PC-9 (cell line): ENCODE measurements at regions of chrX and their contacts with region 1.

Region 1: DNA sequence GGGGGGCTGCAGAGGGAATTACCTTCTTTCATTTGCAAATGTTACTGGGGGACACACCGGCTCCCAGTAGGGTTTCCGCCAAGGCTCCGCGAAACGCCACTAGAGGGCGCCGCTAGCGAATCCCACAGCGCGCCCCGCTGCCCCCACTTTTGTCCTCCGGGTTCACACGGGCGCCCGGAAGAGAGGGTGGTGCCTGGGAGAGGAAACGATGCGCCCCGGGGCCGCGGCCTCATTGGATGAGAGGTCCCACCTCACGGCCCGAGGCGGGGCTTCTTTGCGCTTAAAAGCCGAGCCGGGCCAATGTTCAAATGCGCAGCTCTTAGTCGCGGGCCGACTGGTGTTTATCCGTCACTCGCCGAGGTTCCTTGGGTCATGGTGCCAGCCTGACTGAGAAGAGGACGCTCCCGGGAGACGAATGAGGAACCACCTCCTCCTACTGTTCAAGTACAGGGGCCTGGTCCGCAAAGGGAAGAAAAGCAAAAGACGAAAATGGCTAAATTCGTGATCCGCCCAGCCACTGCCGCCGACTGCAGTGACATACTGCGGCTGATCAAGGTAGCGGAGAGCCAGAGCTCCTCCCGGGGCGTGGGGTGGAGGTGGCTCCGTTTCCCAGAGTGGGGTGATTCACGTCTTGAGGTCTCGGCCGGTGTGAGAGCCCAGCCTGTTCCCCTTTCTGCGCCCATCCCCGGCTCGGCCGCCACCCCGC is at the start of gene SAT1:
- DNase-seq: peak; percentile 86 to 95
- H3K4me3 ChIP-seq: peak within 1 kb of the TSS; percentile 94
- H3K27ac ChIP-seq: peak within 1 kb of the TSS; percentile 98
- H3K4me1 ChIP-seq: peaks cover 45% of the 10 kb centered on the region
- H3K27me3 ChIP-seq: no peaks in the 10 kb centered on the region
- CTCF ChIP-seq: peak; percentile 85
- total RNA-seq, gene SAT1: 99.1 and 131 TPM in 2 replicates

Region 2: GRCh38 chrX:23694606-23695005 is 88.4 kb before region 1 on chrX:
- CTCF ChIA-PET with region 1: no interaction called
- POLR2A ChIA-PET with region 1: no interaction called
- intact Hi-C with region 1: loop called (anchors 5 kb)
- DNase-seq: peak; percentile 38 to 43
- H3K4me3 ChIP-seq: no peak overlapping the region
- H3K27ac ChIP-seq: no peak overlapping the region
- H3K4me1 ChIP-seq: no peaks in the 10 kb centered on the region
- H3K27me3 ChIP-seq: no peaks in the 10 kb centered on the region
- CTCF ChIP-seq: peak; percentile 49

Region 3: GRCh38 chrX:23720117-23720677 is 62.8 kb before region 1 on chrX:
- CTCF ChIA-PET with region 1: no interaction called
- POLR2A ChIA-PET with region 1: no interaction called
- intact Hi-C with region 1: no loop called
- DNase-seq: no peak
- H3K4me3 ChIP-seq: no peak overlapping the region
- H3K27ac ChIP-seq: no peak overlapping the region
- H3K4me1 ChIP-seq: no peaks in the 10 kb centered on the region
- H3K27me3 ChIP-seq: no peaks in the 10 kb centered on the region
- CTCF ChIP-seq: no peak

Region 4: GRCh38 chrX:23756157-23756559 is 26.9 kb before region 1 on chrX:
- CTCF ChIA-PET with region 1: interaction called, 4 read pairs
- POLR2A ChIA-PET with region 1: no interaction called
- intact Hi-C with region 1: loop called (anchors 2 kb)
- DNase-seq: peak in 1 of 2 experiments; percentile 40
- H3K4me3 ChIP-seq: no peak overlapping the region
- H3K27ac ChIP-seq: no peak overlapping the region
- H3K4me1 ChIP-seq: peaks cover 6% of the 10 kb centered on the region; the same call in 1 of the 2 replicates
- H3K27me3 ChIP-seq: no peaks in the 10 kb centered on the region
- CTCF ChIP-seq: peak; percentile 81

Region 5: DNA sequence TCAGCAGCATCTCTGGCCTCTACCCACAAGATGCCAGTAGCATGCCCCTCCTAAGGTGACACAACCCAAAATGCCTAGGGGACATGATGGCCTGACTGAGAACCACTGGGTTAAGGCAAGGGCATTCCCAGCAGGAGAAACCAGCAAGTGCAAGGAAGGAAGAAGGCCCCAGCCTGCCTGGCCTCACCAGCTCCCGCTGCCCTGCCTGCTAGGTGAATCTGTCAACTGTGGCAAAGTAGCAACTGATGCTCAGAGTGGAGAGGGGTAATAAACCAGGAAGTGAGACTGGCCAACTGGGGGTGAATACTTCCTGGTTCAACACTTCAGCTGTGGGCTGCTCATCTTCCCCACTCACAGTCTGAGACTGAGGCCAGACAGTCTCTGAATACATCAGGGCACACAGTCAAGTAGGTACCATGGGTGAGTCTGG is 34.2 kb after region 1 on chrX:
- CTCF ChIA-PET with region 1: interaction called, 3 read pairs
- POLR2A ChIA-PET with region 1: interaction called, 3 read pairs
- intact Hi-C with region 1: loop called (anchors 1 kb)
- DNase-seq: peak in 1 of 2 experiments; percentile 38
- H3K4me3 ChIP-seq: no peak overlapping the region
- H3K27ac ChIP-seq: no peak overlapping the region
- H3K4me1 ChIP-seq: peaks cover 4% of the 10 kb centered on the region; the same call in 1 of the 2 replicates
- H3K27me3 ChIP-seq: no peaks in the 10 kb centered on the region
- CTCF ChIP-seq: no peak

Region 6: GRCh38 chrX:23883737-23884354 is 100.8 kb after region 1 on chrX:
- CTCF ChIA-PET with region 1: no interaction called
- POLR2A ChIA-PET with region 1: interaction called, 8 read pairs
- intact Hi-C with region 1: loop called (anchors 5 kb)
- DNase-seq: peak; percentile 28 to 66
- H3K4me3 ChIP-seq: no peak overlapping the region
- H3K27ac ChIP-seq: peak overlapping the region; percentile 13; the same call in 1 of the 2 replicates
- H3K4me1 ChIP-seq: peaks cover 14% of the 10 kb centered on the region
- H3K27me3 ChIP-seq: no peaks in the 10 kb centered on the region
- CTCF ChIP-seq: no peak

Region 7: DNA sequence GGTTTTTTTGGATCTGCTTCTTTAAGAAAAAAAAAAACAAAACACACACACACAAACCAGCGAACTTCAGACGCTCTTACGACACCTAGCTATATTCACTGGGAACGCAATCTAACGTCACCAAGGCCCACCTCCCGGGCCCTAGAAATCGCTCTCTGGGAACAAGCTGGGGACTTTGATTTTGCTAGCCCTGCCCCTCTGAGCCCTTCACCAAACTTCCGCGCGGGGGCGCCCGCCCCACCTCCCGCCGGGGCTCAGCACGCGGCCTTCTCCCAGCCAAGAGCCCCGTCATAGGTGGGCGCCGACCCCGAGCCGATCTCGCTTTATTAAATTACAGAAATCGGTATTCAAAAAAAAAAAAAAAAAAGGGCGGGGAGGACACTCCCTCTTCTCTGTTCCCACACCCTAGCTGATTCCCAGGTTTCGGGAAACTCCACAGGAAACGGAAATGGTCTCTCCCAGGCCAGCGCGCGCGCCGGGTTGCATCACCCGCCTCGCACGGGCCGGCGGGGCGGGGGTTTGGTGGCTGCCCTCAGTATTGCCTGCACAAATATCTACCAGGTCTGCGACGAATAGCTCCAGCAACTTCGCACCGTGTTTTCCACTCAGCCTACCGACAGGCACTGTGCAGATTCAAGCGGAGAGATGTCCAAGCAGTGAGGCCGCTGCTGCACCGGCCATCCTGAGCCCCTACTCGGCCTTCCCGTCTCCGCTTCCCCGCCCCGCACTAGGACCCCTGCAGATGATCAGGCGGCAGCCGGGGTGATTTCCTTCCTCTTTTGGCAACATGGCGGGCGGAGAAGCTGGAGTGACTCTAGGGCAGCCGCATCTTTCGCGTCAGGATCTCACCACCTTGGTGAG is 271.4 kb after region 1 on chrX and contains the start of gene EIF2S3:
- CTCF ChIA-PET with region 1: no interaction called
- POLR2A ChIA-PET with region 1: no interaction called
- intact Hi-C with region 1: loop called (anchors 2 kb)
- DNase-seq: peak; percentile 87 to 88
- H3K4me3 ChIP-seq: no peak within 1 kb of the TSS; the same call in 1 of the 2 replicates
- H3K27ac ChIP-seq: no peak within 1 kb of the TSS; the same call in 1 of the 2 replicates
- H3K4me1 ChIP-seq: peaks cover 10% of the 10 kb centered on the region; the same call in 1 of the 2 replicates
- H3K27me3 ChIP-seq: no peaks in the 10 kb centered on the region
- CTCF ChIP-seq: peak; percentile 66
- total RNA-seq, gene EIF2S3: 216 and 252 TPM in 2 replicates